Vagina (tissue), 2 donors: ENCODE measurements at regions of chr1 and their contacts with region 1.

Region 1: GRCh38 chr1:208243967-208244916 is at the start of gene PLXNA2:
- DNase-seq: no peak
- H3K4me3 ChIP-seq: peak within 1 kb of the TSS; percentile 74 to 81
- H3K27ac ChIP-seq: peak within 1 kb of the TSS; percentile 92
- H3K4me1 ChIP-seq: peaks cover 42% of the 10 kb centered on the region
- H3K27me3 ChIP-seq: no peaks in the 10 kb centered on the region
- CTCF ChIP-seq: no peak
- POLR2A ChIP-seq: peak in 1 of 2 donors; percentile 8
- total RNA-seq, gene PLXNA2: 38.3 TPM

Region 2: GRCh38 chr1:208024406-208024805 is 219.8 kb before region 1 on chr1:
- intact Hi-C with region 1: loop called (anchors 5 kb)
- DNase-seq: no peak
- H3K4me3 ChIP-seq: no peak overlapping the region
- H3K27ac ChIP-seq: no peak overlapping the region
- H3K4me1 ChIP-seq: peaks cover 14% of the 10 kb centered on the region
- H3K27me3 ChIP-seq: no peaks in the 10 kb centered on the region
- CTCF ChIP-seq: no peak
- POLR2A ChIP-seq: no peak

Region 3: GRCh38 chr1:208254849-208255248 is 10.6 kb after region 1 on chr1:
- intact Hi-C with region 1: no loop called
- DNase-seq: no peak
- H3K4me3 ChIP-seq: no peak overlapping the region
- H3K27ac ChIP-seq: no peak overlapping the region
- H3K4me1 ChIP-seq: no peaks in the 10 kb centered on the region
- H3K27me3 ChIP-seq: no peaks in the 10 kb centered on the region
- CTCF ChIP-seq: no peak
- POLR2A ChIP-seq: no peak